HCT116 (cell line): ENCODE measurements at regions of chr11 and their contacts with region 1.

Region 1: DNA sequence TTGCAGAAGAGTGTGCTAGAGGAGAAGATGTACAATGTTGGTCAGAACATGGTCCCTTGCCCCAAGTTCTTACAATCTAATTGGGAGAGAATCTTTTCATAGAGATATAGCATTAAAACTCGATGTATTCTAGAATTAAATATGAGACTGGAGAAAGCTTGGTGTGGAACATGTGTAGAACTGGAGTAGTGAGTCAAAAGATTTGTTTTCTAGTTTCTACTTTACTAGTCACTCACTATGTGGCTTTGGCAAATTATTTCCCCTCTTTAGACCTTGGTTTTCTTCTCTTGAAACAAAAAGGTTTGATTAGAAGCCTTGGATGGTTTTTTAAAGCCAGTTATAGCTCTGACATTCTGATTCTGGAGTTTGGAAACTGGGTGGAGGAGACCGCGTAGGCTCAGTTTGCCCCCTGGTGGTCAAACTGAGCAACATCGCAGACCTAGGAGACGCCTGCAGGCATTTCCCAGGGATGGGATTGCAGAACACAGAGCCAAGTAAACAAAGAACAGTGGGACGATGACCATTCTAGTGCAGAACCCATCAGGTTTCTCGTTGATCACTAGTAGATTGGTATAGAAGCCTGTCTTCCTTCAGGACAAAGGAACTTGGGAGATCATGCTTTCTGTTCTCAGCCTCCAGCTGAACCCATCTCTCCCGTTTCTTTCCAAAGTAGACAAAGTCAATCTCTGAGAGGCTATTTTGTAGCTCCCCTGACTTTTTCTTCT is 8.5 kb upstream of the CHRDL2 start:
- DNase-seq: peak; percentile 41
- ATAC-seq: peak; percentile 99
- H3K4me3 ChIP-seq: no peak overlapping the region
- H3K27ac ChIP-seq: no peak overlapping the region
- H3K4me1 ChIP-seq: no peaks in the 10 kb centered on the region
- H3K27me3 ChIP-seq: no peaks in the 10 kb centered on the region
- CTCF ChIP-seq: peak; percentile 80 to 94 (median 92)
- POLR2A ChIP-seq: no peak
- RAD21 ChIP-seq: peak; percentile 75

Region 2: DNA sequence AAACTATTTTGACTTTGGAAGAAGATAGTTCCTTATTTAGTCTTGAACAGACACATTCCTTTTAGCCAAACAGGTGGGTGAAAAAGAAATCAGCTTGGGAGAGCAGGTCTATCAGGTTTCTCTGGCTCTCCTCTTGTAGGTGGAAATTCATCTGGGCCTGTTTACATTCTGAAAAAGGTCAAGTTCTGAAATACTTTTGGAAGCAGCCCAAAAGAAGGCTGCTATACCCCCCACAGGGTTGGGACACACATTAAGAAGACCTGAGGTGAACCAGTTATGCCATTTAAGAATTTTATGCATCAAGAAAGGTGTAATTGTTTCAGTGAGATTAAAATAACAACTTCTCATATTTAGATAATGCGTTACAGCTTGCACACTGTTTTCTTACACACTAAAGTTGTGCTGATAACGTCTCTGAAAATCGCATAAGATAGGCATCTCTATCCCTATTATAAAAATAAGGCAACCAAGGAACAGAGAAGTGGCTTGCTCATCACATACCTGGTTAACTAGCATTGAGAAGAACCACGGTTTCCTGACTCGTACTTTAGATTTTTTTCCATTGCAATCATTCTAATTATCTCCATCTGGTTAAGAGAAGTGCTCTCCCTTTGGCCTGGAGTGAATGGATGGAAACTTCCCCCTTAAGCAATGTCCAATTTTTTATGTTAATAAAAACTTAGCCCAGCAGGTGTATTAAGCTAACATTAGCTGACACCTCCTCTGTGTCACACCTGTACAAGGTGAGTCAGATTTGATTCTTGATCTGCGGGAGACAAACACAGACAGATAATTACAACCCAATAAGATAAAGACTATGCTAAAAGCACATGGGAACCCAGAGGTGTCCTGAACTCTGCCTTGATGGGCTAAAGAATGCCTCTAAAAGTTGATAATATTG is 670.3 kb before region 1 on chr11:
- CTCF ChIA-PET with region 1: no interaction called
- POLR2A ChIA-PET with region 1: no interaction called
- RAD21 ChIA-PET with region 1: no interaction called
- intact Hi-C with region 1: no loop called
- DNase-seq: no peak
- ATAC-seq: no peak
- H3K4me3 ChIP-seq: no peak overlapping the region
- H3K27ac ChIP-seq: no peak overlapping the region
- H3K4me1 ChIP-seq: peaks cover 0 to 11% of the 10 kb centered on the region in 2 experiments; a peak in 2 of 4 replicates
- H3K27me3 ChIP-seq: no peaks in the 10 kb centered on the region
- CTCF ChIP-seq: no peak
- POLR2A ChIP-seq: no peak
- RAD21 ChIP-seq: no peak

Region 3: GRCh38 chr11:74449369-74449931 is 290.3 kb before region 1 on chr11:
- CTCF ChIA-PET with region 1: interaction called, 8 read pairs
- POLR2A ChIA-PET with region 1: no interaction called
- RAD21 ChIA-PET with region 1: no interaction called
- intact Hi-C with region 1: loop called (anchors 1 kb)
- DNase-seq: peak; percentile 57
- ATAC-seq: peak; percentile 82
- H3K4me3 ChIP-seq: no peak overlapping the region
- H3K27ac ChIP-seq: no peak overlapping the region
- H3K4me1 ChIP-seq: peaks cover 0 to 3% of the 10 kb centered on the region in 2 experiments; a peak in 1 of 4 replicates
- H3K27me3 ChIP-seq: no peaks in the 10 kb centered on the region
- CTCF ChIP-seq: peak; percentile 68 to 79 (median 74)
- POLR2A ChIP-seq: no peak
- RAD21 ChIP-seq: peak; percentile 96

Region 4: GRCh38 chr11:74611369-74611861 is 128.3 kb before region 1 on chr11:
- CTCF ChIA-PET with region 1: no interaction called
- POLR2A ChIA-PET with region 1: interaction called, 3 read pairs
- RAD21 ChIA-PET with region 1: no interaction called
- intact Hi-C with region 1: loop called (anchors 1 kb)
- DNase-seq: peak; percentile 33
- ATAC-seq: peak; percentile 47; the same call in 1 of the 2 replicates
- H3K4me3 ChIP-seq: no peak overlapping the region
- H3K27ac ChIP-seq: peak overlapping the region; percentile 1; the same call in 1 of the 2 replicates
- H3K4me1 ChIP-seq: no peaks in the 10 kb centered on the region
- H3K27me3 ChIP-seq: no peaks in the 10 kb centered on the region
- CTCF ChIP-seq: peak; percentile 26 to 45 (median 34); a peak in 4 of 6 replicates
- POLR2A ChIP-seq: no peak
- RAD21 ChIP-seq: peak; percentile 47

Region 5: GRCh38 chr11:74634537-74634936 is 105.2 kb before region 1 on chr11:
- CTCF ChIA-PET with region 1: interaction called, 3 read pairs
- POLR2A ChIA-PET with region 1: no interaction called
- RAD21 ChIA-PET with region 1: no interaction called
- intact Hi-C with region 1: loop called (anchors 5 kb)
- DNase-seq: peak; percentile 71
- ATAC-seq: peak; percentile 85
- H3K4me3 ChIP-seq: no peak overlapping the region
- H3K27ac ChIP-seq: peak overlapping the region; percentile 33; the same call in 1 of the 2 replicates
- H3K4me1 ChIP-seq: peaks cover 47 to 64% of the 10 kb centered on the region in 2 experiments
- H3K27me3 ChIP-seq: no peaks in the 10 kb centered on the region
- CTCF ChIP-seq: peak; percentile 37 to 55 (median 55); a peak in 5 of 6 replicates
- POLR2A ChIP-seq: no peak
- RAD21 ChIP-seq: peak; percentile 63

Region 6: GRCh38 chr11:74702383-74703007 is 37.2 kb before region 1 on chr11:
- CTCF ChIA-PET with region 1: interaction called, 42 read pairs
- POLR2A ChIA-PET with region 1: no interaction called
- RAD21 ChIA-PET with region 1: interaction called, 6 to 7 read pairs
- intact Hi-C with region 1: loop called (anchors 5 kb)
- DNase-seq: peak; percentile 38
- ATAC-seq: peak; percentile 91
- H3K4me3 ChIP-seq: no peak overlapping the region
- H3K27ac ChIP-seq: no peak overlapping the region
- H3K4me1 ChIP-seq: peaks cover 0 to 6% of the 10 kb centered on the region in 2 experiments; a peak in 1 of 4 replicates
- H3K27me3 ChIP-seq: no peaks in the 10 kb centered on the region
- CTCF ChIP-seq: peak; percentile 78 to 98 (median 92)
- POLR2A ChIP-seq: no peak
- RAD21 ChIP-seq: peak; percentile 64

Region 7: GRCh38 chr11:74726547-74727182 is 13.0 kb before region 1 on chr11:
- CTCF ChIA-PET with region 1: interaction called, 26 read pairs
- POLR2A ChIA-PET with region 1: no interaction called
- RAD21 ChIA-PET with region 1: no interaction called
- intact Hi-C with region 1: no loop called
- DNase-seq: peak; percentile 54
- ATAC-seq: peak; percentile 100
- H3K4me3 ChIP-seq: no peak overlapping the region
- H3K27ac ChIP-seq: no peak overlapping the region
- H3K4me1 ChIP-seq: no peaks in the 10 kb centered on the region; a peak in 1 of 4 replicates
- H3K27me3 ChIP-seq: peaks cover 8% of the 10 kb centered on the region
- CTCF ChIP-seq: peak; percentile 86 to 97 (median 89)
- POLR2A ChIP-seq: no peak
- RAD21 ChIP-seq: peak; percentile 82